Activated CD4-positive, alpha-beta T cell treated with anti-CD3 and anti-CD28 coated beads for 36 hours (primary cell): ENCODE measurements at regions of chr3 and their contacts with region 1.

Region 1: GRCh38 chr3:134600685-134601463 is 49.9 kb downstream of the KY start:
- DNase-seq: peak; percentile 83
- ATAC-seq: peak; percentile 90
- H3K4me3 Mint-ChIP-seq: no peak overlapping the region
- H3K27ac Mint-ChIP-seq: no peak overlapping the region
- H3K4me1 Mint-ChIP-seq: peaks cover 5% of the 10 kb centered on the region
- H3K27me3 Mint-ChIP-seq: peaks cover 5% of the 10 kb centered on the region

Region 2: GRCh38 chr3:134423153-134423552 is 177.7 kb before region 1 on chr3:
- CTCF ChIA-PET with region 1: no interaction called
- POLR2A ChIA-PET with region 1: no interaction called
- intact Hi-C with region 1: no loop called
- DNase-seq: no peak
- ATAC-seq: no peak
- H3K4me3 Mint-ChIP-seq: no peak overlapping the region
- H3K27ac Mint-ChIP-seq: no peak overlapping the region
- H3K4me1 Mint-ChIP-seq: no peaks in the 10 kb centered on the region
- H3K27me3 Mint-ChIP-seq: no peaks in the 10 kb centered on the region

Region 3: DNA sequence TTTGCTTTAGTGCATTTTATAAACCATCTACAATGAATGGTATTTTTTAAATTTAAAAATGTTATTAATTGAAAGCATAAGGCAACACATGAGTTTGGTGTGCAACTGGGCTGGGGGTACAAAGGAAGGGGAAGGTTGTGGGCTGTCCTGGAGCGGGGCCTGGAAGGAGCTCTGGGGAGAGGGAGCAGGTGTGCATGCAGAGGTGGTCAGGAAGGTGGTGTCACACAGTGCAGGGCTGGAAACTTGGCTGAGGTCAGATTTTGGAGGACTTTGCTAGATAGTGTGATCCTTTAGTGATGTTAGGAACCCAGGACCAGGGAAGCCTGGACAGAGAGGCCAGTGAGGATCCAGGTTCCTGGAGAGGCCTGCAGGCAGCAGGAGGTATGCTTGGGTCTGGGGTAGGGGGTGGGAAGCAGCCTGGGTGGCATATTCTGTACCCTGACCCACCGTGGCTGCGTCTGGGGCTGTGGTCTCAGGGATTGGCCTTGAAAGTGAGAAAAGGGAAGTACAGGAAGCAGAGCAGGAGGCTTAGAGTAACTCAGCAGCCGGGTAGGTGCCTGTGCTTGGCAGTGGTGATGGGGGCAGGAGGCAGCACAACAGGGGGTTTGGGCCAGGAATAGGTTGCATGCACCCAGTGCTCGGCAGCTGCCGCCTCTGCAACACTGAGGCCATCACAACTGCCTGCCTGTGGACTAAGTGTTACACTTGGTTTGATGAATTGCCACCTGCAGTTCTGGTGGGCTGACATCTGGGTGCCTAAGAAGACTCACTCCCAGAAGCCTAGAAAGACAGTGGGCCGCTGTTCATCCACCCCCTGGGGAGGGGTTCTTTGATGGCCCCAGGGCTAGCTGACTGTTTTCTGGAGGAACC is 17.0 kb after region 1 on chr3:
- CTCF ChIA-PET with region 1: interaction called, 21 read pairs
- POLR2A ChIA-PET with region 1: no interaction called
- intact Hi-C with region 1: no loop called
- DNase-seq: no peak
- ATAC-seq: no peak
- H3K4me3 Mint-ChIP-seq: no peak overlapping the region
- H3K27ac Mint-ChIP-seq: no peak overlapping the region
- H3K4me1 Mint-ChIP-seq: no peaks in the 10 kb centered on the region
- H3K27me3 Mint-ChIP-seq: no peaks in the 10 kb centered on the region

Region 4: DNA sequence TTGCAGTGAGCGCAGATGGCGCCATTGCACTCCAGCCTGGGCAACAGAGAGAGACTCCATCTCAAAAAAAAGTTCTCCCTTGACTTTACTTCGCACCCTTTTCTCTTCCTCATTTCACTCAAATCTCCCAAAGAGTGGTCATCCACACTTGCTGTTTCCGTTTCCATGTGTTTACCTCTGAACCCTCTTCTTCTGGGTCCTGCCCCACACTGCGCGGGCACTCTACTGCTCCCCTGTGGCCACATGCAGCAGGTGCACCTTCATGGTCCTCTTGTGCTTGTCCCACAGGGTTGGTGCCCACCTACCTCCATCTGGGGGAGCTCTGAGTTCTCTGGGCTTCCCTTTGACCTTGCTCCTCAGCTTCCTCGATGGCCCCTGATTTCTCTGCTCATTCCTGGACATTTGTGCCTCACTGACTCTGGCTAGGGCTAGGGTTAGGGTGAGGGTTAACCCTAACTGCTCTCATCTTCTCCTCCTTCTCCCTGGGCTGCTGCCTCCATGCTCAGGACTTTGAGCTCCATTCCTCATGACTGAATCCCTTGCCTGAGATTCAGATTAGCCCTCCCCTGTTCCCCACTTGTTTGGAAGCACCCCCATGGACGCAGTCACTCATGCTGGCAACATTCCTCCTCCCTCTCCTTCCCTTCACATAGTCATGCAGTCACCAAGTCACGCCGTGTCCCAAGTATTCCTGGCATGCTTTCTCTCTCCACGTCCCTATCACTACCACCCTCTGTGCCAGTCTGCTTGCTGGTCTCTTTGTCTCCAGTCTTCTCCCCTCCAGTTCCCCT is 76.5 kb after region 1 on chr3:
- CTCF ChIA-PET with region 1: interaction called, 4 read pairs
- POLR2A ChIA-PET with region 1: no interaction called
- intact Hi-C with region 1: loop called in 1 of 2 experiments (anchors 1 kb)
- DNase-seq: peak; percentile 35
- ATAC-seq: no peak
- H3K4me3 Mint-ChIP-seq: no peak overlapping the region
- H3K27ac Mint-ChIP-seq: no peak overlapping the region
- H3K4me1 Mint-ChIP-seq: no peaks in the 10 kb centered on the region
- H3K27me3 Mint-ChIP-seq: peaks cover 3% of the 10 kb centered on the region

Region 5: GRCh38 chr3:135503760-135504686 is 903.1 kb after region 1 on chr3:
- CTCF ChIA-PET with region 1: no interaction called
- POLR2A ChIA-PET with region 1: no interaction called
- intact Hi-C with region 1: loop called in 1 of 2 experiments (anchors 2 kb)
- DNase-seq: peak; percentile 66
- ATAC-seq: no peak
- H3K4me3 Mint-ChIP-seq: no peak overlapping the region
- H3K27ac Mint-ChIP-seq: no peak overlapping the region
- H3K4me1 Mint-ChIP-seq: no peaks in the 10 kb centered on the region
- H3K27me3 Mint-ChIP-seq: peaks cover 12% of the 10 kb centered on the region

Region 6: DNA sequence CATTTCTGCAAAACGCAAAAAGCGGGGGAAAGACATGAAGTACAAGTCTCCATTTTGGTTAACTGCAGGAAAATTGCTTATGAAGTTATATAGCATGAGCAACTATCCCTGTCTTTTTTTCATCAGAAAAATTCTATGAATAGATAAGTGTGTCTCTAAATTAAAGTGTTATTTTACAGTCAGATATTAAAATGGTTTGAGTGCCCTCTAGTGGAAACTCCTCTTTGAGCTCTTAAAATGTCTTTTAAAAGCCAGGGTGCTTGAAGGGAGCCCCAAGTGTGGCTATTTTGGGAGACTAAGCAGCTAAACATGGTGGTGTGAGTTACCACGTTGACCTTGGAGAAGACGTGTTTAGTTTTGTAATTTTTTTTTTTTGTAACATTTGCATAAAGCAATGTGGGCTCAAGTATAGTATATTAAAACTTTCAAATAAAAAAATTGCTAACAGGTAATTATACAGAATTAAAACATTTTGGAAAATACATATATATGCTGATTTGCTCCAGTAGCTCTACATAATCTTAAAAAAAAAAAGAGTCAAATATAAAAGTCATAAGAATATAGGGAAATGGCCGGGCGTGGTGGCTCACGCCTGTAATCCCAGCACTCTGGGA is 1441.8 kb after region 1 on chr3:
- CTCF ChIA-PET with region 1: interaction called, 3 read pairs
- POLR2A ChIA-PET with region 1: no interaction called
- intact Hi-C with region 1: loop called in 1 of 2 experiments (anchors 2 kb)
- DNase-seq: no peak
- ATAC-seq: peak; percentile 19
- H3K4me3 Mint-ChIP-seq: no peak overlapping the region
- H3K27ac Mint-ChIP-seq: no peak overlapping the region
- H3K4me1 Mint-ChIP-seq: no peaks in the 10 kb centered on the region
- H3K27me3 Mint-ChIP-seq: peaks cover 13% of the 10 kb centered on the region